Vagina (tissue), 2 donors: ENCODE measurements at regions of chr15 and their contacts with region 1.

Region 1: DNA sequence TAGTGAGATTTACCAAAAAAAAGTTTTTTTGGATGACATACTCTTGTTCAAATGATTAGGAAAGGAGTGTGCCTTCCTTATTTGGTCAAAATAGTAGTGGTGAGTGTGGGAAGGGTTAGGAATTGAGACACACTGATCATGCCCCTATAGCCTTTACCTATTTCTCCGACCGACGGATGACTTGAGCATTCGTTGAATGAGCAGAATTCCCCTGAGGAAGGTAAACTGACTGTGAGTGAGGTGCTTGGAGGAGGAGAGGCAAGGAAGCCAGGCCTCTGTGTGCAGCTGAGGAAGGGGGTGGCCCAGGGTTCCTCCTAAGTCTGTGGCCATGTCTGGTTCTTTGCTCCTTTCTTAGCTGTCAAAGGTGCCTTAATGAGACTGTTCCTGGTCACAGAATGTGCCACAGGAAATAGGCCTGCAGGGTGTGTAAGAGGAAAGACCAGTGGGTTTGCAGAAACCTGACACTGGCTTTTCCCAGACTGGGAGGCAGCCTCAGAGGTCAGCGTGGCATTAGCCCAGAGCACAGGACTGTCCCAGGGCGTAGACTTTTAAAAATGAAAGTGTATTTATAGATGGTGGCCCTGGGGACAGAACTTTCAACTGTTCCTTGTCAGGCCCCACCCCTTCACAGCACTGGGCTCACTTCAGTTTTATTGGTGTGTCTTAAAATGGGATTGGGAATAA is 307.7 kb upstream of the C2CD4B start:
- DNase-seq: no peak
- H3K4me3 ChIP-seq: no peak overlapping the region
- H3K27ac ChIP-seq: peak overlapping the region; percentile 49
- H3K4me1 ChIP-seq: peaks cover 52% of the 10 kb centered on the region
- H3K27me3 ChIP-seq: no peaks in the 10 kb centered on the region
- CTCF ChIP-seq: no peak
- POLR2A ChIP-seq: no peak

Region 2: DNA sequence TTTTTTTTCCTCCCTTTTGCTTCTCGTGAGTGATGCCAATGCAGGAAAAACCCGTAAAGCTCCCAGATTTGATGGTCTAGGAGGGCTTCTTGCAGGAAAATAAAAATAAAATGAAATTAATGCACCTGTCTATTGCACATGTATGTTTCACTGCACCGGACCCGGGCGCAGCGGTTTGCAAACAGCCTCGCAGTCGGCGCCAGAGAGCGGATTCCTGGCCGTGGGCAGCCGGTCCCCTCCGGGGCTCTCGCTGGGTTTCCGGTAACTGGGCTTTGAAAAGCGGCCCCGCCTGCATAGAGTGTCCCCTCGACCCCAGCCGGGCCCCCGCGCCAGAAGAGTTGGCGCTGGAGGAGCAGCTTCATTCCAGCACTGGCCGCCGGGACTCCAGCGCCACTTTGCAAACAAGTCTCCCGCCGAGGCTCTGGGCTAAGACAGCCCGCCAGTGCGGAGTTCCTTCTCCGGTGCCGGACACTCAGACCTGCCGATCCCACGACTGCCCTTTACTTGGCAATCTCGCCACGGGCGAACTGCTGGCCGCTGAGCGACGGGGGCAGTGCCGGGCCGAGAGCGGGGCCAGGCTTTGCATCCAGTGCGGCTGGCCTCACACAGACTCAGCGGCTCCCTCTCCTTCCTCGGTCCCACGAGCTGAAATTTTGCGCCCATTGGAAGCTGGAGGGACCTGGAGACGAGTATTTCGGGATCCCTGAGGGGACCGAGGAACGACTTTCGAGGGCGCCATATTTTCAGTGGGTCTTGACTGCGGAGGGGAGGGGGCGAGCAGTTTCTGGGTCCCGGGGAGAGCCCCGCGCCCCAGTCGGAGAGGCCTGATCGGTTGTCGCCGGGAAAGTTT is 81.7 kb before region 1 on chr15:
- intact Hi-C with region 1: loop called (anchors 1 kb)
- DNase-seq: no peak
- H3K4me3 ChIP-seq: peak overlapping the region; percentile 89 to 91
- H3K27ac ChIP-seq: peak overlapping the region; percentile 94
- H3K4me1 ChIP-seq: peaks cover 14% of the 10 kb centered on the region
- H3K27me3 ChIP-seq: no peaks in the 10 kb centered on the region
- CTCF ChIP-seq: no peak
- POLR2A ChIP-seq: no peak